ENCODE measurements at regions of chr6 and their contacts with region 1.

Region 1: GRCh38 chr6:143575440-143575839 is 63.9 kb upstream of the FUCA2 start:
- DNase-seq: peak in 1 of 2 donors; percentile 28
- H3K4me3 ChIP-seq: no peak overlapping the region
- H3K27ac ChIP-seq: no peak overlapping the region
- H3K4me1 ChIP-seq: no peaks in the 10 kb centered on the region
- H3K27me3 ChIP-seq: no peaks in the 10 kb centered on the region
- CTCF ChIP-seq: peak; percentile 77 to 92 (median 87)
- POLR2A ChIP-seq: no peak

Region 2: DNA sequence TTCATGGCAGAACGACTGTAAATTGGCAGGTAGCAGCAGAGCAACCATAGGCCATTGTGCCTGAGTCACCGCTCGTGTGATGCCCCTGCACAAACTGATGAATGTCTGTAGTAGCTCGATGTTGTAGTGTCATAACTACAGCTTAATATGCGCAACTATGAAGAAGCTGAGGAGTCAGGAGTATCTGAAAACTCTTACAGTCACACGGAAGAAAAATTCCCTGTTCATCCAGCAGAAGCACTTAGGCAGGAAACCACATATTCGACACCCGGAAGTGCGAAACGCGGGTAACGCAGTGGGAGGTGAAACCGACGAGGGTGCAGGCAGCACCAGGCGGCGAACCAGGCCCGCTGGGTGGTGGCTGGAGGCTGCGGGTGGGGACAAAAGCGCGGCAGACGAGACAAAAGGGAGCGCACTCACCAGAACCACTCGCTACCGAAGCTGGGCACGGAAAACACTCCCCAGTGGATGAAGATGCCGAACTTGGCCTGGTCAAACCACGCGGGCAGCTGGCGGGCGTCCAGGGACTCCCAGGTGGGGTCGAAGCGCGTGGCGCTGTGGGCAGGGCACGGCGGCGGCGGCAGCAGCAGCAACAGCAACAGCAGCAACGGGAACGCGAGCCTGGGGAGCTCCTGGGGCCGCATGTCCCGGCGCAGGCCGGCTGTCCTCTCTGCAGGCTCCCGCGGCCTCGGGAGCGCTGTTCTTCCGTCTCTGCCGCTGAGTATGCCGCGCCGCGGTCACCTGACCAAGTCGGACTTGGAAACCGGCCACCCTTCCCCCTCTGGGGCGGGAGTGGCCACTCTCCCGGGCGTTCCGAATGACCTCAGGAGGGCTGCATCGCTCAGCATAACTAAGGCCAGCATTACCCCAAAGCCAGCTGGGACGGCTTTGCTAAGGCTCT is 64.2 kb before region 1 on chr6 and contains the start of gene FUCA2:
- intact Hi-C with region 1: no loop called
- DNase-seq: peak; percentile 67 to 85
- H3K4me3 ChIP-seq: peak within 1 kb of the TSS; percentile 69 to 85 (median 78)
- H3K27ac ChIP-seq: peak within 1 kb of the TSS; percentile 80 to 89
- H3K4me1 ChIP-seq: no peaks in the 10 kb centered on the region
- H3K27me3 ChIP-seq: no peaks in the 10 kb centered on the region
- CTCF ChIP-seq: no peak
- POLR2A ChIP-seq: peak; percentile 48
- total RNA-seq, gene FUCA2: 21.3 to 48.2 (median 25.6) TPM

Region 3: DNA sequence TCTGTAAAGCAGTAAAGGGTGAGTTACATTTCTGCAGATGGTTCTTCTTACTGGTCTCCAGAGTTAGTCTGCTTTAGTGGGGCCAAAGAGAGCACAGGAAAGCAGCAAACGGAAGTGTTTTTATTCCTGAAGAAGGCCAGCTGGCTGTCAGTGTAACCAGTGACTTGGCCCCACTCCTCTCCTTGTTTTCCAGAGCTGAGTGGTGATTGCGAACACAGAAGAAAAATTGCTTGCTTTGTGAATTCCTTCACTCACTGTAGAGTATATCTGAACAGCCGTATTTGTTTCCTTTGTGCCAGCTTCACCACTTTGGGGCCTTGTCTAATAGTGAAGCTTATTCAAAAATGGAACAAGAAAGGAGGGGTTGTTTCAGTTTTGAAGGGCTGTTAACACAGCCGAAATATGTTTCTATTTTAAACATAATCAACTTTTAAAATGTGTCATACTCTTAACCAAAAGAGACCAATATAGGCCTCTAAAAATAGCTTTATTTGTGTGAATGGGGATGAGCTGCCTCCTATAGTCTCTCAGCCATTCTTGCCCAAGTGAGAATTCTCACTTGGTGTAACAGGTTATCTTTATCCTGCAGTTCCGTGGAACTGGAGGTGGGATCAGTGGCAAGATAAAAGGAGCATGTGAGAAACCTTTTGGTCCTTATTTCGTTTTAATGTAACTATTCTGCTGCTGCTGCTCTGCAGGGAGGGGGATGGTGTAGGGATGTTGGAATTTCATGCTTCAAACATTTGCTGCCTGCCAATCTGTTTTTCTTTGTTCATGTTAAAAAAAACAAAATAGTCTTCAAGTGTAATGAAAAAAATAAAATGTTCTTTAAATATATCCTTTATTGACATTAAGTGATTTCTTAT is 326.7 kb after region 1 on chr6:
- intact Hi-C with region 1: no loop called
- DNase-seq: no peak
- H3K4me3 ChIP-seq: no peak overlapping the region
- H3K27ac ChIP-seq: peak overlapping the region; percentile 45 to 60
- H3K4me1 ChIP-seq: no peaks in the 10 kb centered on the region
- H3K27me3 ChIP-seq: no peaks in the 10 kb centered on the region
- CTCF ChIP-seq: no peak
- POLR2A ChIP-seq: no peak

Region 4: DNA sequence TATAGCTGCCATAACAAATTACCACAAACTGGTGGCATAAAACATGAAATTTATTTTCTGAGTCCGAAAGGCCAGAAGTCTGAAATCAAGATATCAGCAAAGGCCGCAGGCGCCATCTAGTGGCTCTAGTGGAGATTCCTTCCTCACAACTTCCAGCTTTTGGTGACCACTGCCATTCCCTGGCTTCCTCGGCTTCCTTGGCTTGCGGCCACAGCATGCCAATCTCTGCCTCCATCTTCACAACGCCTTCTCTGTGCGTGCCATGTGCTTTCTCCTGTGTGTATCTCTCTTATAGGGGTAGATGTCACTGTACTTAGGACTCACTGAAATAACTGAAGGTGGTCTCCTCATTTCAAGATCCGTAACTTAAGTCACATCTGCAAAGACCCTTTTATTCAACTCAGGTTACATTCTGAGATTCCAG is 438.1 kb after region 1 on chr6:
- intact Hi-C with region 1: loop called (anchors 10 kb)
- DNase-seq: peak; percentile 45 to 65
- H3K4me3 ChIP-seq: no peak overlapping the region
- H3K27ac ChIP-seq: no peak overlapping the region
- H3K4me1 ChIP-seq: no peaks in the 10 kb centered on the region
- H3K27me3 ChIP-seq: no peaks in the 10 kb centered on the region
- CTCF ChIP-seq: peak; percentile 46 to 90 (median 75)
- POLR2A ChIP-seq: no peak